ENCODE measurements at regions of chr5 and their contacts with region 1.

Region 1: GRCh38 chr5:39948867-39949468 is 524.2 kb upstream of the DAB2 start:
- DNase-seq: peak; percentile 46
- CTCF ChIP-seq: peak; percentile 56

Region 2: DNA sequence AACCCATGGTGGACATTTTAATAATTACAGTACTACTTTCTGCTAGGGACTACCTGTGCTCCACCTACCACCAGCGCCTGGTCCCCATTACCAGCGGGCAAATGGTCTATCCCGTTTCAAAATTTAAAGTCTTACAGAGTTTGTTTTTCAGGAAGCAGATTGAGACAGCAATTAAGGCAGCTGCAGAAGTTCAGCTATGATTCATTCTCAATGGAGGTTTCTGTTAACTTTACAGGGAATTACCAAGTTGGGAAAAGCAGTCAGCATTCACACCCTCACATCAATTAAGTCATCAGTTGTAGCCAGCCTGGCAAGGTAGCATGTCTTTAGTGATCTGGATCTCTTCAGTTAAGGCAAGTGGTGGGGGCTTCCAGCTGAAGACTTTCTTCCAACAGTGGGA is 113.6 kb before region 1 on chr5:
- CTCF ChIA-PET with region 1: no interaction called
- POLR2A ChIA-PET with region 1: no interaction called
- DNase-seq: no peak
- CTCF ChIP-seq: no peak

Region 3: GRCh38 chr5:39968381-39968780 is 19.4 kb after region 1 on chr5:
- CTCF ChIA-PET with region 1: no interaction called
- POLR2A ChIA-PET with region 1: no interaction called
- DNase-seq: no peak
- CTCF ChIP-seq: no peak

Region 4: DNA sequence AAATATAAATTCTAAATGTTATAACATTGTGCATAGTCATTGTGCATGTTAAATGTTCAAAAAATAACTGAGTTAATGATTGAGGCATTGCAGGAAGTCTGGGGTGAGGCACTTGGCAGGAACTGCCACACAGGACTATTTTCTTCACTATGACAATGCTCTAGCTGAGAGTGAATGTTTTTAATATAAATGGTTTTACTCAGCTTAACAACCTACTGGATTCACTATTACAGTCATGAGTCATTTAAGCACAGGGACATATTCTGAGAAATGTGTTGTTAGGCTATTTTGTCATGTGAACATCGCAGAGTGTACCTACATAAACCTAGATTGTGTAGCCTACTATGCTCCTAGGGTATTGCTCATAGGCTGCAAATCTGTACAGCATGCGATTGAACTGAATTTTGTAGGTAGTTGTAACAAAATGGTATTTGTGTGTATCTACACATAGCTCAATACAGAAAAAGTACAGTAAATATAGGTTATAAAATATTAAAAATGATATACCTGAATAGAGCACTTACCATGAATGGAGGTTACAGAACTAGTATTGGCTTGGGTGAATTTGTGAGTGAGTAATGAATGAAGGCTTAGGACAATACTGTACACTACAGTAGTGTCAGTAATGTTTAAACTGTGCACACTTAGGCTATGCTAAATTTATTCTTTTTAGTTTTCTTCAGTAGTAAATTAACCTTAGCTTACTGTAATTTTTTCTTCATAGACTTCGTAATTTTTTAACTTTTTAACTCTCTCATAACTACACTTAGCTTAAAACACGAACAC is 384.7 kb after region 1 on chr5:
- CTCF ChIA-PET with region 1: no interaction called
- POLR2A ChIA-PET with region 1: no interaction called
- DNase-seq: no peak
- CTCF ChIP-seq: no peak

Region 5: GRCh38 chr5:40681363-40682153 is 732.6 kb after region 1 on chr5:
- CTCF ChIA-PET with region 1: interaction called, 34 read pairs
- POLR2A ChIA-PET with region 1: no interaction called
- DNase-seq: peak; percentile 19
- CTCF ChIP-seq: no peak

Region 6: GRCh38 chr5:40688127-40688761 is 739.3 kb after region 1 on chr5:
- CTCF ChIA-PET with region 1: interaction called, 34 read pairs
- POLR2A ChIA-PET with region 1: interaction called, 3 read pairs
- DNase-seq: peak; percentile 65
- CTCF ChIP-seq: peak; percentile 80

Region 7: DNA sequence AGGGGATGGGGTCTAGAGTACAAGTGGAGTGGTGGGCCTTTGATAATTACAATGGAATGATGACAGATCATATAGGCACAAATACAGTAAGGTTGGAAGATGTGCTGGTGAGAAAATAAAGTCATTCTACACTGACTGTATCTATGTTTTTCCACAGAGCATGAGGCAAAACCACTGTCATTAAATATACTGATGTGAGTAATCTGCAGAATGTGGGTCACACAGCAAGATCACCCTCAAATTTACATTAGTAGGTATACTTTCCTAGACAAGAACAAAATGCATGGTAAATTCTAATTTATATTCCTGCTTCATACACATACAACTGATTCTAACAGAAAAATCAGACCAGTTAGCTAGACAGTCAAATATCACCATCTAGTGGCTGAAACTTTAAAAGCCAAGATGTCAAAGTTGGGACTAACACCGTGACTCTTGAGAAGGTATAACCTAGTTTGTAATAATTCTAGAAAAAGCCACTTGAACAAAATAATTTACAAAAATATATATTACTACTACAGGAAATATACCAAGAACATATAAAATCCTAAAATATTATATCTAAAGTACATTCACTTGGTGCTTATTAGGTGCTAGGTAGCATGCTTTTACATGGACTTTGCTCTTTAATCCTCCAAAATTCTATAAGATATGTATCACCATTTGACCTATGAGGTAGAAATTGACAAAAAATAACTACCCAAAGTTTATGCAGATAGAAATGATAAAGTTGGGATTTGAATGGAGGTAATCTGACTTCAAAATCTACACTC is 787.3 kb after region 1 on chr5:
- CTCF ChIA-PET with region 1: interaction called, 18 read pairs
- POLR2A ChIA-PET with region 1: no interaction called
- DNase-seq: peak; percentile 32
- CTCF ChIP-seq: peak; percentile 59

Measured in GM10248 (cell line).